ENCODE measurements at regions of chr3 and their contacts with region 1.

Region 1: DNA sequence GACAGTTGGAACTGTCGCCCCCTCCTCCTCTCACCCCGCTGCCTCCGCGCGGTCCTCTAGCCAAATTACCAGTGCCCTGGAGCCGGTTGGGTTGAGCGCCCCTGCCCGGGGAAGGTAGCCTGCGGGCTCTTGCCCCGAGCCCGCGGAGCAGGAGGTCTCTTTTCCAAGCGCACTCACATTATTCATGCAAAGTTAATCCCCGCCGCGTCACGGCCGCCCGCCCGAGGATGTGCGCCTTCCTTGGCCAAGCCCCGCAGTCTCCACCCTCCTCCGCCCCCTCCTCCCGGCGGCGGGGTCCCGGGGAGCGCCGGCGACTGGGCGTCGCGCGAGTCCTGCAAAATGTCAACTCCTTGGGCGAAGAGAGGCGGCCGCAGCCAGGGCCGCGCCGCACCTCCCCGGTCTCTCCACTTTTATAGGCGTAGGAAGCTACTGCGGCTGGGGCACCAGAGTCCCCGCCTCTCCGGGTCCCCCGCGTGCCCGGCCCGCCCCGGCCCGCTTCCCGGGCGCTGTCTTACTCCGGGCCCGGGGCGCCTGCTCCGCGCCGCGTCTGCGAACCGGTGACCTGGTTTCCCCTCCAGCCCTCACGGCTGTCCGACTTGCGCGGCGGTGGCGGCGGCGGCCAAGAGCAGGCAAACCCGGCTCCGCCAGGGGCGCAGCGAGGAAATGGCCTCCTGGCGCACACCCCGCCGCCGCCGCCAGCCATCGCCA is at the start of gene THRB:
- DNase-seq: peak; percentile 87
- H3K4me3 ChIP-seq: peak within 1 kb of the TSS; percentile 61 to 91 (median 72)
- H3K27ac ChIP-seq: peak within 1 kb of the TSS; percentile 89 to 97 (median 94)
- H3K4me1 ChIP-seq: peaks cover 0 to 47% (median 44%) of the 10 kb centered on the region in 4 donors
- H3K27me3 ChIP-seq: no peaks in the 10 kb centered on the region
- CTCF ChIP-seq: peak in 2 of 4 experiments; percentile 6 to 42
- EP300 ChIP-seq: no peak
- POLR2A ChIP-seq: peak; percentile 38 to 64
- total RNA-seq, gene THRB: 29.7 to 49.5 (median 35.6) TPM

Region 2: DNA sequence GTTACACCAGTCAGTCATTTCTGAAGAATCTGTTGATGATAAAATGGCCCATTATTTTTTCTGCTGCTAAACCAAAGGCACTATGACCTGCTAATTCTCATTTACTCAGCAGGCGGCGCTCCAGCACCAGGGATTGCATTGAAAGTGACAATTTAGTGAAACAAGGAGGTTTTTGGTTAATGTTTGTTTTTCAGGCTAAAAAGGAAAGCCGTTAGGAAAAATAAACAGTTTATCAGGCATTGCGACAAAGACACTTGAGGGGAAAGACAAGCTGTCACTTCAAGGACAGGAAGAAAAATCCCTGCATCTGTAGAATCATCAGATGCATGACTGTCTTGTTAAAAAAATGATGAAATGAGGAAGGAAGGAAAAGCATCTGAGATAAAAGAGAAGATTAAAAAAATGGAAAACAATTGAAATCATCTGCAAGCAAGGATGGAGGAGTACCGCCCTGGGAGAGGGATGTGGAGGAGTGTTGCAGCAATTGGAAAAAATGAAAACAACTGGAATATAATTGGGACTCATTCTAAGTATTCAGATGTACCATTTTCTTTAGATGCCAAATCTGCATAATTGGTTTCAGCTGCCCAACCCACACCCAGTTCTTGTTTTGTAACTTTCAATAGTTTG is 495.6 kb before region 1 on chr3:
- intact Hi-C with region 1: loop called (anchors 1 kb)
- DNase-seq: peak; percentile 80
- H3K4me3 ChIP-seq: no peak overlapping the region
- H3K27ac ChIP-seq: no peak overlapping the region
- H3K4me1 ChIP-seq: peaks cover 0 to 16% (median 13%) of the 10 kb centered on the region in 4 donors
- H3K27me3 ChIP-seq: no peaks in the 10 kb centered on the region
- CTCF ChIP-seq: peak; percentile 87 to 98 (median 94)
- EP300 ChIP-seq: no peak
- POLR2A ChIP-seq: no peak

Region 3: DNA sequence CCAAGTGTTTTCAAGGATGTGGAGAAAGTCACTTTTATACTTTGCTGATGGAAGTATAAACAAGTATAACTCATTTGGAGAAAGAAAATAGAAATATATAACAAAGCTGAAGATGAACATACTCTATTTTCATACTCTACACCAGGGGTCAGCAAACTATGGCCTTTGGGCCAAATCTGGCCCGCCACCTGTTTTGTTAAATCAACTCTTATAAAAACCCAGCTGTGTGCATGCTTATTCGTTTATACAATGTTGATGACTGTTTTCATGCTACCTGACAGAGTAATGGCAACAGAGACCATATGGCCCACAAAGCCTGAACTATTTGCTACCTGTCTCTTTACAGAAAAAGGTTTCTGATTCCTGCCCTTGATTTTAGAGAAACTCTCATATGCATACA is 425.7 kb before region 1 on chr3:
- intact Hi-C with region 1: loop called (anchors 10 kb)
- DNase-seq: peak; percentile 71
- H3K4me3 ChIP-seq: no peak overlapping the region
- H3K27ac ChIP-seq: no peak overlapping the region
- H3K4me1 ChIP-seq: peaks cover 0 to 8% (median 0%) of the 10 kb centered on the region in 4 donors
- H3K27me3 ChIP-seq: no peaks in the 10 kb centered on the region
- CTCF ChIP-seq: peak in 3 of 4 experiments; percentile 29 to 47 (median 42)
- EP300 ChIP-seq: no peak
- POLR2A ChIP-seq: no peak

Region 4: GRCh38 chr3:24264748-24265158 is 230.0 kb before region 1 on chr3:
- intact Hi-C with region 1: loop called (anchors 2 kb)
- DNase-seq: no peak
- H3K4me3 ChIP-seq: no peak overlapping the region
- H3K27ac ChIP-seq: no peak overlapping the region
- H3K4me1 ChIP-seq: peaks cover 0 to 42% (median 28%) of the 10 kb centered on the region in 4 donors
- H3K27me3 ChIP-seq: no peaks in the 10 kb centered on the region
- CTCF ChIP-seq: peak; percentile 31 to 69 (median 64)
- EP300 ChIP-seq: no peak
- POLR2A ChIP-seq: no peak

Region 5: GRCh38 chr3:24299806-24300626 is 194.8 kb before region 1 on chr3:
- intact Hi-C with region 1: loop called (anchors 5 kb)
- DNase-seq: no peak
- H3K4me3 ChIP-seq: no peak overlapping the region
- H3K27ac ChIP-seq: peak overlapping the region in 2 of 4 donors; percentile 7 to 57
- H3K4me1 ChIP-seq: peaks cover 0 to 40% (median 33%) of the 10 kb centered on the region in 4 donors
- H3K27me3 ChIP-seq: no peaks in the 10 kb centered on the region
- CTCF ChIP-seq: no peak
- EP300 ChIP-seq: no peak
- POLR2A ChIP-seq: no peak

Region 6: GRCh38 chr3:24365194-24365612 is 129.6 kb before region 1 on chr3:
- intact Hi-C with region 1: loop called (anchors 5 kb)
- DNase-seq: no peak
- H3K4me3 ChIP-seq: no peak overlapping the region
- H3K27ac ChIP-seq: peak overlapping the region in 3 of 4 donors; percentile 50 to 59 (median 58)
- H3K4me1 ChIP-seq: peaks cover 0 to 63% (median 37%) of the 10 kb centered on the region in 4 donors
- H3K27me3 ChIP-seq: no peaks in the 10 kb centered on the region
- CTCF ChIP-seq: no peak
- EP300 ChIP-seq: no peak
- POLR2A ChIP-seq: no peak

Region 7: GRCh38 chr3:24410861-24411260 is 83.9 kb before region 1 on chr3:
- intact Hi-C with region 1: no loop called
- DNase-seq: no peak
- H3K4me3 ChIP-seq: no peak overlapping the region
- H3K27ac ChIP-seq: no peak overlapping the region
- H3K4me1 ChIP-seq: peaks cover 0 to 15% (median 10%) of the 10 kb centered on the region in 4 donors
- H3K27me3 ChIP-seq: no peaks in the 10 kb centered on the region
- CTCF ChIP-seq: no peak
- EP300 ChIP-seq: no peak
- POLR2A ChIP-seq: no peak

Measured in sigmoid colon (tissue), 7 donors.